ENCODE measurements at regions of chr6 and their contacts with region 1.

Region 1: DNA sequence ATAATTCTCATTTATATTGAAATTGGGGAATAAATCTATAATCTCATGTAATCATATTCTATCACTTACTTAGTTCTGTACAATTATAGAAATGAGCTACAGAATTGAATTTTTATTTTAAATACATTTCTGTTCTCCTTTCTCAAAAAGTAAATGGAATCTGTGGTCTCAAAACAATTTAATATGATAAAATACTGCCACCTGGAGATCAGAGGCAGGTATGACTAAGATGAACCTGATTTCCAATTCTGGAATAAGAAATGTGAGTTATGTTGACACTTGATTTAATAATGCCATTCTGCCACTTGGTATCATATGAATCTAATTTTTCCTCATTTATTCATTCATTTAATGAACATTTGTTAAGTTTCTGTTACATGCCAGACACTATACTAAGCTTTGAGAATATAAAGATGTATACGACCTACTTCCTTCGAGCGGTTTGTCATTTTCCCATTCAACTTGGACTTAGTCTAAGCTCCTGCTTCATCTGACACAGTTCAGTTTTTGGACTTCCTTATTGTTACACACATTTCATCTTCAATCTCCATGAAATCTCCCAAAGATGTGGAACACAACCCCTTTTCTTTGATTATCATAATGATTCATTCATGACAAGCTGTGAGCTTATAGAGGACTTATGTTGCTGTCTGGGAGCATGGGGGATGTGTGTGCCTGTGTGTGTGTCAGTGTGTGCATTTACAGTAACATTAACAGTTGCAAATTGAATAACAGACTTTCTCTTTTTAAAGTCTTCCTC is 7.5 kb upstream of the CCDC28A start:
- DNase-seq: peak; percentile 30 to 63 (median 55)
- ATAC-seq: peak; percentile 57; the same call in 1 of the 3 replicates
- H3K4me3 ChIP-seq: no peak overlapping the region
- H3K27ac ChIP-seq: no peak overlapping the region
- H3K4me1 ChIP-seq: no peaks in the 10 kb centered on the region; a peak in 1 of 5 replicates
- H3K27me3 ChIP-seq: peaks cover 0 to 7% of the 10 kb centered on the region in 2 experiments; a peak in 2 of 5 replicates
- CTCF ChIP-seq: peak in 2 of 3 experiments; percentile 49 to 78; a peak in 4 of 6 replicates
- EP300 ChIP-seq: no peak
- POLR2A ChIP-seq: no peak
- RAD21 ChIP-seq: peak; percentile 74 to 82

Region 2: DNA sequence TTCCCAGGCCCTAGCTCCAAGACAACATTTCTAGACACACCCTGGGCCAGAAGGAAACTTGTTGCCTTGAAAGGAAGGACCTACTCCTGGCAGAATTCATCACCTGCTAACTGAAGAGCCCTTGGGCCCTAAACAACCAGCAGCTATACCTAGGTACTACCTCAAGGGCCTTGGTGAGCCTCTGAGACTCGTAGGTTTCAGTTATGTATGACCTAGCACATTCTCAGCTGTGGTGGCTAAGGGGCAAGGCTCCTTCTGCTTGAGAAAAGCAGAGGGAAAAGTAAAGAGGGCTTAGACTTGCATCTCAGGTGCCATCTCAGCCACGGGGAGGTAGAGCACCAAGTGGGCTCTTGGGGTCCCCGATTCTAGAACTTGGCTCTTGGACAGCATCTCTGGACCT is 134.5 kb before region 1 on chr6:
- CTCF ChIA-PET with region 1: no interaction called
- POLR2A ChIA-PET with region 1: no interaction called
- in situ Hi-C with region 1: no loop called
- intact Hi-C with region 1: no loop called
- DNase-seq: no peak
- ATAC-seq: no peak
- H3K4me3 ChIP-seq: no peak overlapping the region
- H3K27ac ChIP-seq: no peak overlapping the region
- H3K4me1 ChIP-seq: no peaks in the 10 kb centered on the region
- H3K27me3 ChIP-seq: peaks cover 0 to 18% of the 10 kb centered on the region in 2 experiments; a peak in 2 of 5 replicates
- CTCF ChIP-seq: no peak
- EP300 ChIP-seq: no peak
- POLR2A ChIP-seq: no peak
- RAD21 ChIP-seq: no peak

Region 3: DNA sequence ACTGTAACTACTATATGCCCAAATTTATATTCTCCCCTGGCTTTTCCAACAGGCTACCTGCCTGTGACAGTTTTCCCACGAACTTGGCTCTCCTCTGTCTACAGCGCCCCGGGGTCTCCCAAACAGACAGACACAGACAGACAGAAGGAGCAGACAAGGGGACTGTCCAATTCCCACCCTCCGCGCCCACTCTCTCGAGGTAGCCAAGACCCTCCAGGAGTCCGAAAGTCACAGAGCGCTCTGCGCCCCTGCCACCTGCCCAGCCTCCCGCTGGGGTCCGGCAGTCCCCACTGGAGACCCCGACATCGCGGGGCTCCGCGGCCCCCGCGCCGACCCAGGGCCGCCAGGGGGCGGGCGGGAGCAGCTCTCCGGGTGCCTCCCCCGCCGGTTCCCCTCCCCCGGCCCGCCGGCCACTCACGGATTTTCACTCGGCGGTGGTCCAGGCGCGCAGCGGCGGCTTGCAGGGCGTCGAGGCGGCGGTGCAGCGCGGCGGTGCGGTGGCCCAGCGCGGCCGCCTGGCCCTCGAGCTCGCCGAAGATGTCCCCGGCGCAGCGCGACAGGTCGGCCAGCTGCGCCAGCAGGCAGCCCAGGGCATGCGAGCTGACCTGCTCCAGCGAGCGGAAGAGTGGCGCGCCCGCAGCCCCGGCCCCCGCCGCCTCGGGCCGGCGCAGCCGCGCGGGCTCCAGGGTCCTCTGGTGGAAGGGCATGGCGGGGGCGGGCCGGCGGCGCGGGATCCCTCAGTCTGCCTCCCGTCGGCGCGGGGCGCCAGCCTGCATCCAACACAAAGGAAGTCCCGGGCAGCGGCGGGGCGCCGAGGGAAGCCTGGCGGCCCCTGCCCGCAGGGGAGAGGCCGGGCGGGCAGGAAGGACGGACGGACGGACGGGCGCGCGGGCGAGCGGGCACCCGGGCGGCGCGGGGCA is 73.8 kb before region 1 on chr6:
- CTCF ChIA-PET with region 1: no interaction called
- POLR2A ChIA-PET with region 1: no interaction called
- in situ Hi-C with region 1: no loop called
- intact Hi-C with region 1: loop called (anchors 5 kb)
- DNase-seq: peak; percentile 57 to 92 (median 90)
- ATAC-seq: peak; percentile 84
- H3K4me3 ChIP-seq: peak overlapping the region; percentile 45
- H3K27ac ChIP-seq: no peak overlapping the region
- H3K4me1 ChIP-seq: peaks cover 0 to 17% of the 10 kb centered on the region in 2 experiments; a peak in 2 of 5 replicates
- H3K27me3 ChIP-seq: peaks cover 31 to 57% of the 10 kb centered on the region in 2 experiments
- CTCF ChIP-seq: peak; percentile 55 to 75 (median 64); a peak in 5 of 6 replicates
- EP300 ChIP-seq: no peak
- POLR2A ChIP-seq: no peak
- RAD21 ChIP-seq: peak; percentile 39 to 53; a peak in 3 of 4 replicates

Region 4: GRCh38 chr6:138752017-138752416 is 14.1 kb before region 1 on chr6:
- CTCF ChIA-PET with region 1: no interaction called
- POLR2A ChIA-PET with region 1: no interaction called
- in situ Hi-C with region 1: no loop called
- intact Hi-C with region 1: no loop called
- DNase-seq: no peak
- ATAC-seq: no peak
- H3K4me3 ChIP-seq: no peak overlapping the region
- H3K27ac ChIP-seq: no peak overlapping the region
- H3K4me1 ChIP-seq: no peaks in the 10 kb centered on the region
- H3K27me3 ChIP-seq: peaks cover 2 to 10% of the 10 kb centered on the region in 2 experiments; a peak in 2 of 5 replicates
- CTCF ChIP-seq: no peak
- EP300 ChIP-seq: no peak
- POLR2A ChIP-seq: no peak
- RAD21 ChIP-seq: no peak

Measured in K562 (cell line).